ENCODE measurements at regions of chr6 and their contacts with region 1.

Region 1: GRCh38 chr6:10411971-10412745 is 2.7 kb downstream of the TFAP2A start:
- DNase-seq: no peak

Region 2: DNA sequence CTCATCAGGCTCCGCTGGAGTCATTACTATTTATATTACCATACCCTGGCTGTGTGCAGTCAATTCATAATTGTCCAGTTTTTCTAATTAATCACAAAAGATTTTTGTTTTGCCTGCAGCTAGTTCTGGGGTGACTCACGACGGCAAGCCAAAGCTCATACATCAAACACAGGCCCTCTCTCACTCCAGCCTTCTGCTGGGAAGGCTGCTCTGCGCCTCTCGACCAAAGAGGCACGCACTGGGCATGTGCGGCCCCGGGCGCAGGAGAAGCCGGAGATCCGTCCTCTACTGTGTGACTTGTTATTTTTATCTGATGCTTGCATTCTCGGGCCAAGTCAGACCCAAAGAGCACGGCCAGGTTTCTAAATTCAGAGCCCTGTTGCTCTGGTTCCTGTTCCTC is 95.8 kb before region 1 on chr6:
- CTCF ChIA-PET with region 1: interaction called, 3 read pairs
- POLR2A ChIA-PET with region 1: interaction called, 10 read pairs
- DNase-seq: peak; percentile 50

Region 3: GRCh38 chr6:10429638-10430427 is 17.7 kb after region 1 on chr6:
- CTCF ChIA-PET with region 1: interaction called, 15 read pairs
- POLR2A ChIA-PET with region 1: interaction called, 143 read pairs
- DNase-seq: no peak

Measured in HEK293T (cell line).